MCF 10A (cell line): ENCODE measurements at regions of chr1 and their contacts with region 1.

Region 1: DNA sequence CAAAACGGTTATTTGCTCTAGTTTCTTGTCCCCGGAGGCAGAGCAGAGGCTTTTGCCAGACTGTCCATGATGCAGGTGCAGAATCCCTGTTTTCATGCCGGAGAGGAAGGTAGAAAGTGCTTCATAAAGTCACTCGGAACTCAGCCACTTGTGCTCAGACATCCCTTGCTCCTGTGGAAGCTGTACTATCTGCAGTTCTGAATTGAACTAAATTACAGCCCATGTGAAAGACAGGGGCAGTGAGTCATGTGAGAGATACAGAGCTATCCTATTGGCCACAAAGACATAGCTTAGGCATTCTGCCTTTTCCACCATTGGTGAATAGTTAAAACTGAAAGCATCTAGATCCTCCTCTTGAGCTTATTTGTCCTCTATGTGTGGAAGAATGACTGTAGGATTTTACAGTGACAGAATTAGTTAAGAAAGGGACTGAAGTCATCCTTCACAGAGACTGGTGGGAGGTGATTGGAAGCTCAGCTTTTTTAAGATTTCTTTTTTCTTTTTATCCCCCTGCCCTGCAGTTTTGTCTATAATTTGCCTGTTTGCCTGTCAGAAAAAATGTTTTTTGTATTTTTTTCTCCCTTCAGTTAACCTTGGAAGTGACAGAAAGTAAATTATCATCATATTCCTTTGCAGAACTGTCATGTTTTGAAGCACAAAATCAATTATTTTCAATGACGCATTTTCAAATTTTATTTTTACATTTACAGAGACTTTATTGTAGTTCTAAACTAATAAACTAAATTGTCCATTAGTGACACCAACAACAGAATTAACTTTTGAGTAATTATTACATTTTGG is 298.6 kb downstream of the PTPRC start:
- DNase-seq: peak; percentile 95
- H3K4me3 Mint-ChIP-seq: no peak overlapping the region
- H3K27ac Mint-ChIP-seq: no peak overlapping the region
- H3K4me1 Mint-ChIP-seq: peaks cover 4% of the 10 kb centered on the region
- H3K27me3 Mint-ChIP-seq: no peaks in the 10 kb centered on the region
- CTCF ChIP-seq: no peak

Region 2: DNA sequence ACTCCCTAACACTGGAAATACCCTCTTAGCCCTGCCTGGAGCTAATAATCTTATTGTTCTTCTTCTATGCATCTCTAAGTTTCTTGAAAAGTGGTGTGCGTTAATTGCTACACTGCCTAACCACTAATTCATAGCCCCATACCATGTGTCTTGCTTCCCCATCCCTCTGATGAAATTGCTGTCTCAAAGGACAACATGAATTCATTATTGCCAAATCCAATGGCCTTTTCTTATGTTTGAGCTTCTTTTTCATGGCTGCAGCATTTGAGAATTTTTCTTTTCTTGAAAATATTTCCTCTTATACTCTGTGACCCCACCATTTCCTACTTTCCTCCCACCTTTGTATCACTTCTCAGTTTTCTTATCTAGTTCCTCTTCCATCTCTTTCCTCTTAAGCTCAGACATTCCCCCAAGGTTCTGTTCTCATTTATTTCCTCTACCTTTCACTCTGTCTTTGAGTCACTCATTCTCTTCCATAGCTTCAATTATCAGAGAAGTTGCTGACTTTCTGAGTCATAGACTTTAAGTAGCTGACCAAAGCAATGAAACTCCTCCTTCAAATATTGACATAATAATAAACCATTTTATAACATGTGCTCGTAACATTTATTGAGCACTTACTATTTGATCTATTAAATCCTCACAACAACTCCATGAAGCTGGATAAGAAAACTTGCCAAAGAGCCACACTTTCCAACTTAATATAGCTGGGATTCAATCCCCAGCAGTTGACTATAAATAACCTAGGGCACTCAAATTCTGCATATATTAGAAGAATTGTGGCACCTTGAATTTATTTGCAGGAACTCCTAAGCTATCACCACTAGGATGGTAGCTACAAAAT is 361.4 kb before region 1 on chr1:
- CTCF ChIA-PET with region 1: no interaction called
- POLR2A ChIA-PET with region 1: no interaction called
- intact Hi-C with region 1: no loop called
- DNase-seq: no peak
- H3K4me3 Mint-ChIP-seq: no peak overlapping the region
- H3K27ac Mint-ChIP-seq: peak overlapping the region; percentile 1
- H3K4me1 Mint-ChIP-seq: peaks cover 6% of the 10 kb centered on the region
- H3K27me3 Mint-ChIP-seq: no peaks in the 10 kb centered on the region
- CTCF ChIP-seq: no peak

Region 3: DNA sequence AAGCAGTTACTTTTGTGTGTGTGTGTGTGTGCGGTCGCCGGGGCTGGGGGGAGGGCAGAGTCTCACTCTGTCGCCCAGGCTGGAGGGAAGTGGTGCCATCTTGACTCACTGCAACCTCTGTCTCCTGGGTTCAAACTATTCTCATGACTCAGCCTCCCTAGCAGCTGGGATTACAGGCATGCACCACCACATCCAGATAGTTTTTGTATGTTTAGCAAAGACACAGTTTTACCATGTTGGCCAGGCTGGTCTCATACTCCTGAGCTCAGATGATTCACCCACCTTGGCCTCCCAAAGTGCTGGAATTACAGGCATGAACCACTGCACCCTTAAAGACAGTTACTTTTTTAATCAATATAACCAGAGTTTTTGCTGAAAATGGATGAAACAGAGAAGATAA is 91.6 kb before region 1 on chr1:
- CTCF ChIA-PET with region 1: no interaction called
- POLR2A ChIA-PET with region 1: interaction called, 9 read pairs
- intact Hi-C with region 1: loop called (anchors 5 kb)
- DNase-seq: no peak
- H3K4me3 Mint-ChIP-seq: no peak overlapping the region
- H3K27ac Mint-ChIP-seq: no peak overlapping the region
- H3K4me1 Mint-ChIP-seq: peaks cover 5% of the 10 kb centered on the region
- H3K27me3 Mint-ChIP-seq: no peaks in the 10 kb centered on the region
- CTCF ChIP-seq: no peak

Region 4: GRCh38 chr1:198903203-198903602 is 34.2 kb before region 1 on chr1:
- CTCF ChIA-PET with region 1: interaction called, 19 read pairs
- POLR2A ChIA-PET with region 1: interaction called, 502 read pairs
- intact Hi-C with region 1: loop called (anchors 2 kb)
- DNase-seq: peak; percentile 66
- H3K4me3 Mint-ChIP-seq: peak overlapping the region; percentile 54
- H3K27ac Mint-ChIP-seq: peak overlapping the region; percentile 94
- H3K4me1 Mint-ChIP-seq: peaks cover 64% of the 10 kb centered on the region
- H3K27me3 Mint-ChIP-seq: no peaks in the 10 kb centered on the region
- CTCF ChIP-seq: no peak

Region 5: DNA sequence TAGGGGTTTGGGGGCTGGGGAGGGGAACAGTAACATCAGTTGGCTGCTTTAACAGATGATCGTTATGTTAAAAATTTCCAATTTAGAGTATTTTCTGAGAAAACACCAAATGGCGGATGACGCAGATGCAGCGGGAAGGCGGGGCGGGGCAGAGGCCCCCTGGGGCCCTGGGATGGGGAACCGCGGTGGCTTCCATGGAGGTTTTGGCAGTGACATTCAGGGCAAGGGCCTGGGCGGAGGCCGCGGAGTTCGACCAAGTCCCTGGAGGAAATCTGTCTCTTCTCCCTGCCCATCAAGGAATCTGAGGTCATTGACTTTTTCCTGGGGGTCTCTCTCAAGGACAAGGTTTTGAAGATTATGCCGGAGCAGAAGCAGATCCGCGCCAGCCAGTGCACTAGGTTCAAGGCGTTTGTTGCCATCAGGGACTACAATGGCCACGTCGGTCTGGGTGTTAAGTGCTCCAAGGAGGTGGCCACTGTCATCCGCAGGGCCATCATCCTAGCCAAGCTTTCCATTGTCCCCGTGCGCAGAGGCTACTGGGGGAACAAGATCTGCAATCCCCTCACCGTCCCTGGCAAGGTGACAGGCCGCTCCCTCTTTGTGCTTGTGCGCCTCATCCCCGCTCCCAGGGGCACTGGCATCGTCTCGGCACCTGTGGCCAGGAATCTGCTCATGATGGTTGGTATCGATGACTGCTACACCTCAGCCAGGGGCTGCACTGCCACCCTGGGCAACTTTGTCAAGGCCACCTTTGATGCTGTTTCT is 11.6 kb after region 1 on chr1:
- CTCF ChIA-PET with region 1: no interaction called
- POLR2A ChIA-PET with region 1: interaction called, 11 read pairs
- intact Hi-C with region 1: no loop called
- DNase-seq: no peak
- H3K4me3 Mint-ChIP-seq: no peak overlapping the region
- H3K27ac Mint-ChIP-seq: no peak overlapping the region
- H3K4me1 Mint-ChIP-seq: no peaks in the 10 kb centered on the region
- H3K27me3 Mint-ChIP-seq: no peaks in the 10 kb centered on the region
- CTCF ChIP-seq: no peak

Region 6: DNA sequence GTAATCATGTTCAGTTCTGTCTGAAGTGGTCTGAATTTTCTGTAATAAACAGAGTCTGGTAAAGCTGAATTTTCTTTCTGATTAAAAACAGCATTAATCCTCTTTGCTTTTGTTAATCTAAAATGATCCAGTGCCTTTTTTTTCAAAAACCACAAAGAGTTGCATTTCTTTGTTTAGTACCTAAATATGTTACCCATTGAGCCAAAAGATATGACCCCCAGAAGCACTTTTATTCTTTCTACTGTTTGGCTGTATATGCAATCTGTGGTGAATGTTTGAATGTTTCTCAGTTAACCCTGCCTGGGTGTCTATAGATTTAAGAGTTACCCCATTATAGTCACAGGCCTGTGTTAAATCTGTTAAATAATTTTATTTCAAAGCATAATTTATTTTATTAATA is 96.2 kb after region 1 on chr1:
- CTCF ChIA-PET with region 1: no interaction called
- POLR2A ChIA-PET with region 1: no interaction called
- intact Hi-C with region 1: no loop called
- DNase-seq: no peak
- H3K4me3 Mint-ChIP-seq: no peak overlapping the region
- H3K27ac Mint-ChIP-seq: no peak overlapping the region
- H3K4me1 Mint-ChIP-seq: peaks cover 7% of the 10 kb centered on the region
- H3K27me3 Mint-ChIP-seq: no peaks in the 10 kb centered on the region
- CTCF ChIP-seq: no peak

Region 7: DNA sequence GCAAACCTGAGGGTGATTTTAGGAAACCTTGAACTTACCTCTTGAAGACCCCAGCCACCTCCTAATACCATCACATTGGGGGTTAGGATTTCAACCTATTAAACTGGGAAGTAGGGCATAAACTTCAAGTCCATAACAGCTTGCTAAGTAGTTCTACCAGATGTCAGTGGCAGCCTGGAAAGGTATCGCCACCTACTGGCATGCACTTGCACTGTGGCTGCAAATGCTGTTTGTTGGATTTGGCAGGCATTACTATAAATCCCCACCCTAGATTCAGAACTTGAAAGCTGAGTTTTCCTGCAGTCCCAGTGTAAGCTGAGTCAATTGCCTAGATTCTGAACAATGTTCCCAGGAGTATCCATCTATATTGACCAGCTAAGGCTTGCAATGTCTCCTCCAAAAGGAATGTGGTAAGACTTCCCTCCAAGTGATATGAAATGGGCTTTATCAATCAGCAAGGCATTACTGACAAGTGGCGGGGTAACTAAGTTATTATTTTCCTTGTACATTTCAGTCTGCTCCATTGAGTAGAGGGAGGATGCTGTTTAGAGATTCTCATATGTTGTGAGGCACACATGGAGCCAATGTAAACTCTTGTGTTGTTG is 175.9 kb after region 1 on chr1:
- CTCF ChIA-PET with region 1: interaction called, 12 read pairs
- POLR2A ChIA-PET with region 1: interaction called, 3 read pairs
- intact Hi-C with region 1: loop called (anchors 2 kb)
- DNase-seq: peak; percentile 70
- H3K4me3 Mint-ChIP-seq: no peak overlapping the region
- H3K27ac Mint-ChIP-seq: no peak overlapping the region
- H3K4me1 Mint-ChIP-seq: no peaks in the 10 kb centered on the region
- H3K27me3 Mint-ChIP-seq: no peaks in the 10 kb centered on the region
- CTCF ChIP-seq: peak; percentile 82

Region 8: DNA sequence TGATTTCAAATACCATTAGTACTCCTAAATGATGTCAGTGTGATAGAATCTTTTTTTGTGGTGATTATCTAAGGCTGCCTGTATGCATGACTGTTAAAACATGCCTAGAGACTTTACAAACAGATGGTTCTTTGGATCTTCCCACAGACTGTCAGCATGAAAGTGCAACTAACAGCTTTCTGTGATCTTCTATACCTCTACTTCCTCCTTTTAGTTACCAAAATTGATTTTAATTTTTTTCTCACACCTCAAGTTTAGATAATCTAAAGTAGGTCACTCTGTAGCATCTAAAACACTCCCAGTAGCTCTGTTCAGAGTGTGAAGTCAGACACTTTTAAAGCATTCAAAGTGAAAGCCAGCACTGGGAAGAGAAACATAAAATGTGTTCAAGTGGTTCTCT is 235.9 kb after region 1 on chr1:
- CTCF ChIA-PET with region 1: no interaction called
- POLR2A ChIA-PET with region 1: no interaction called
- intact Hi-C with region 1: no loop called
- DNase-seq: no peak
- H3K4me3 Mint-ChIP-seq: no peak overlapping the region
- H3K27ac Mint-ChIP-seq: no peak overlapping the region
- H3K4me1 Mint-ChIP-seq: no peaks in the 10 kb centered on the region
- H3K27me3 Mint-ChIP-seq: no peaks in the 10 kb centered on the region
- CTCF ChIP-seq: no peak

Region 9: GRCh38 chr1:199422198-199422597 is 484.8 kb after region 1 on chr1:
- CTCF ChIA-PET with region 1: interaction called, 4 read pairs
- POLR2A ChIA-PET with region 1: interaction called, 3 read pairs
- intact Hi-C with region 1: loop called (anchors 5 kb)
- DNase-seq: peak; percentile 75
- H3K4me3 Mint-ChIP-seq: no peak overlapping the region
- H3K27ac Mint-ChIP-seq: no peak overlapping the region
- H3K4me1 Mint-ChIP-seq: no peaks in the 10 kb centered on the region
- H3K27me3 Mint-ChIP-seq: no peaks in the 10 kb centered on the region
- CTCF ChIP-seq: peak; percentile 56

Region 10: DNA sequence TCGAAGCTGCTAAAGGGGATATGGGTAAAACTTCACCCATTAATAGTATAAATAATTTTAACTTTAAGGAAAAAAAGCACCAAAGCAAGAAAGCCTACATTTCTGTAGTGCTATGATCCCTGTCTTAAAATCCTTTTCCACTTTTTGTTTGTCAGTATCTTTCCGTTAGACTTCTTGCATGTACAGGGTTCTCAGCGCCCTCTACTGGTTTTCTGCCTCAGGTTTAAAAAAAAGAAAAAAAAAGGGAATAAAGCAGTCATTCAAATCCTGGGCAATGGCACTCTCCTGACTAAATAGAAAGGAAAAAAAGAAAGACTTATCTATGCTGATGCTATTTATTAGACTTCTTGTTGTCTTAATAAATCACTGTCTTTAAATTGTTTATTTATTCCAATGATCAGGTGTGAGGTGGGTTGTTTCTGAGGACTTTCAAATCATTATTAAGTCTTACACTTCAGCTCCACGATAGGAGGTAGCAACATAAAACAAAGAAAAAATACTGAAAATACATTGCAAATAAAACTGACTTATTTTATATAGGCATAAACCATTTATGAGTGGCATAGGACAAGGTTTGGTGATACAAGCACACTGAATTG is 614.6 kb after region 1 on chr1:
- CTCF ChIA-PET with region 1: no interaction called
- POLR2A ChIA-PET with region 1: no interaction called
- intact Hi-C with region 1: loop called (anchors 5 kb)
- DNase-seq: peak; percentile 74
- H3K4me3 Mint-ChIP-seq: no peak overlapping the region
- H3K27ac Mint-ChIP-seq: no peak overlapping the region
- H3K4me1 Mint-ChIP-seq: no peaks in the 10 kb centered on the region
- H3K27me3 Mint-ChIP-seq: no peaks in the 10 kb centered on the region
- CTCF ChIP-seq: peak; percentile 96